ENCODE measurements at regions of chr22 and their contacts with region 1.

Region 1: DNA sequence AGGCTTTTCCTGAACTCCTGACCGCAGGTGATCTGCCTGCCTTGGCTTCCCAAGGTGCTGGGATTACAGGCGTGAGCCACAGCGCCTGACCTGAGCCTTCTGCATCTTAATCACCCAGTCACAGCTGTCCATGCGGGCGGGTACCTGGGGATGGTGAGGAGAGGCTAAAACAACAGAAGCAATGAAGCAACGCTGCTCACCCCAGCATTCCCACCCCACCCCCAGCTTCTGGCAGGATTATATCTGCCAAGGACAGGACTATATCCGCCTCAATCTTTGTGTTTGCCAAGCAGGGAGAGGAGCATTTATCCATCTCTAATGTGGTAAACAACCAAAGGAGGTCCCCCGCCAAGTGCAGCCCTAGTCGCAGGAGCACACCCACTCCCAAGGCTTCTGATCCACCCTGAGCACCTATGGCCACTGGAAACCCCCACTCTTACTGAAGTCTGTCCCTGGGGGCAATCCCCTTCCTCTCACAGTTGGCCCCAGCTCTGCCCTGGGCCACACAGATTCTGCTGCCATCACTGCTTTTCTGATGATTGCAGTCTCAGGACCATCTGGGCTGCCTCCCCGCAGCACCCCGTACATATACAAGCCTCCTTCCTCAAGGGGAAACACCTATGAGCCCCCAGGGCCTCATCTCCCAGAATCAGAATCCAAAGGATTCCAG is 8.8 kb upstream of the LGALS2 start:
- DNase-seq: peak in 1 of 2 experiments; percentile 66
- H3K4me3 ChIP-seq: no peak overlapping the region
- H3K27ac ChIP-seq: no peak overlapping the region
- H3K4me1 ChIP-seq: peaks cover 5% of the 10 kb centered on the region; the same call in 1 of the 2 replicates
- H3K27me3 ChIP-seq: no peaks in the 10 kb centered on the region
- CTCF ChIP-seq: no peak

Region 2: DNA sequence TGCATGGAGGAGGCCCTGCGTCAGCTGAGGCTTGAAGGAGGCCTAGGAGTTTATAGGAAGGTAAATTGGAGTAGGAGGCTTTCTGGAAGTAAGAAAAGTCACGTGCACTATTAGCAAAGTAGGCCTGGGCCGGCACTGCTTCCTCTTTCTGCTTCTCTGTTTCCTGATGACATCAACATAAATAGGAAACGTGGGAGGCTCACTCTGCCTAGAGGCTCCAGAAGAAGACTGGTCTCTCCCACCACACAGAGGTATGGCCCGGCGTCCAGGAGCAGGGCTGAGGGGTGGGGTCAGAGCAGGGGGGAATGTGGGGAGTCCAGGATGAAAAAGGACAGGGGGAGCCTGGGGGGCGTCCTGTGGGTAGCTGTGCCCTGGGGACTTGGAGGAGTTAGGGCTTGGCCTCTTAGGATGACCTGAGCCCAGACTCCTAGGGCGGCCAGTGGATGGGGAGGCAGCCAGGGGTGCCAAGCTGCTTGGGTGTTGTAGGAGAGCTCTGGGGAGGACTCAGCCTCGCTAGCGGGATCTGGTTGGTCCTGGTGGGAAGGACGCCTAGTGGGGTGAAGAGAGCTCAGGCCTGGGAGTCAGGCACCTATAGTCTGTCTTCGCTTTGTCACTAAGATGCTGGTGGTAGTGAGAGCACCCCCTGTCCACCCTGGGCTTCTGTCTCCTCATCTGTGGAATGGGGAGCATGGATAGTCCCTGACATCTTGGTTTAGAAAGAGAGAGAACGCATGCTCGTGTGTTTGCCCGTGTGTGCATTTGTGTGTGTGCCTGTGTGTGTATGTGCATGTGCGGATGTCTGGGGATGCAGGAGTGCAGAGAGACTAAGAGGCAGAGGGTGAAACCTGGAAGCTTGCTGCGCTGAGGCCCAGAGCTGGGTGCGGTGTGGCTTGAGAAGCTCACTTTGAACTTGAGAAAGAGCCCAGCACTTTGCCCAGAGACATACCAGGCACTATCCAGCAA is 675.0 kb before region 1 on chr22 and contains the start of gene CSF2RB:
- CTCF ChIA-PET with region 1: interaction called, 11 read pairs
- POLR2A ChIA-PET with region 1: no interaction called
- intact Hi-C with region 1: no loop called
- DNase-seq: no peak
- H3K4me3 ChIP-seq: no peak within 1 kb of the TSS
- H3K27ac ChIP-seq: no peak within 1 kb of the TSS
- H3K4me1 ChIP-seq: 0 out of 2 replicates have a peak, but pooled peaks cover 20% of the 10 kb centered on the region
- H3K27me3 ChIP-seq: no peaks in the 10 kb centered on the region
- CTCF ChIP-seq: no peak
- total RNA-seq, gene CSF2RB: not detected in 2 replicates

Region 3: GRCh38 chr22:37561212-37562048 is 27.3 kb before region 1 on chr22:
- CTCF ChIA-PET with region 1: interaction called, 31 read pairs
- POLR2A ChIA-PET with region 1: interaction called, 15 read pairs
- intact Hi-C with region 1: no loop called
- DNase-seq: peak; percentile 78 to 94
- H3K4me3 ChIP-seq: peak overlapping the region; percentile 95
- H3K27ac ChIP-seq: peak overlapping the region; percentile 82
- H3K4me1 ChIP-seq: peaks cover 57% of the 10 kb centered on the region
- H3K27me3 ChIP-seq: no peaks in the 10 kb centered on the region
- CTCF ChIP-seq: peak; percentile 98

Region 4: DNA sequence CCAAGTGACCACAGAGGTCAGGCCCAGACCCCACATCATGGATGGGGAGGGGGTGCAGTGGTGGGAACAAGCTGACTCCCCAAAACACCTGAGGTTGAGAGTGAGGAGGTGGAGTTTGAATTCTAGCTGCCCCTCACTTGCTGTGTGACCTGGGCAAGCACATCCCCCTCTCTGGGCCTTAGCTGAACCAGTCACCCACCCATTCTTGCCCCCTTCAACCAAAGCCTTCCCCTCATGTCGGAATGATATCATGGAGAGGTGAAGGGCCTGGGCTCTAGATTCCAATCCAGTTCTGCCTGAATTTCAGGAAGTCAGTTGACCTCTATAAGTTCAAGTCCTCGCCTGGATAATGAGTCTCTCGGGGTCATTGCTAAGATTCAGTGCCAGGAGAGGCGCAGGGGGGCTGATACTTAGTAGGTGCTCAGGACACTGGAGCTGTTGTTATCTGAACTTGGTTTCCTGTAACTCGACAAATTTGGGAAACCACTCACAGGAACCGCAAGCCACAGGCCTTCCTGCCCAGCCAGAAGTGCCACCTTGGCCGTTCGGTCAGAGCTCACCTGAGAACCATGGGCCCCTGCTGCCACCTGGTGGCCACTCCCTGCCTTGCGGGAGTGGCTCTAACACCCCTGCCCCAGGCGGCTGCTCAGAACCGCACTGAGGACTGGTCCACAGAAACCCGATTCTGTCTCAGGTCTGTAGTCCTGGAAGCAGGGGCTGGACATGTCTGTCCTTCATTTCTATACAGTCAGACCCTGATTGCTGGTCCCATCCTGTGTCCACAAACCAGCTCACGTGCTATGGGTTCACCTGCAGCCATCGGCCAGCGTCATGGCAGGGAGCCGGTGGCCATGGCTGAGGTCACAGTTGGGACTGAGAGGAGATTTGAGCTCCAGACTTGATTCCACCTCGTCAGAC is 21.5 kb before region 1 on chr22:
- CTCF ChIA-PET with region 1: interaction called, 31 read pairs
- POLR2A ChIA-PET with region 1: interaction called, 4 read pairs
- intact Hi-C with region 1: loop called (anchors 1 kb)
- DNase-seq: peak; percentile 93 to 98
- H3K4me3 ChIP-seq: no peak overlapping the region
- H3K27ac ChIP-seq: peak overlapping the region; percentile 81
- H3K4me1 ChIP-seq: peaks cover 91% of the 10 kb centered on the region
- H3K27me3 ChIP-seq: no peaks in the 10 kb centered on the region
- CTCF ChIP-seq: peak; percentile 99

Region 5: GRCh38 chr22:37633625-37634416 is 45.1 kb after region 1 on chr22:
- CTCF ChIA-PET with region 1: no interaction called
- POLR2A ChIA-PET with region 1: no interaction called
- intact Hi-C with region 1: no loop called
- DNase-seq: peak in 1 of 2 experiments; percentile 50
- H3K4me3 ChIP-seq: no peak overlapping the region
- H3K27ac ChIP-seq: no peak overlapping the region
- H3K4me1 ChIP-seq: peaks cover 6% of the 10 kb centered on the region
- H3K27me3 ChIP-seq: no peaks in the 10 kb centered on the region
- CTCF ChIP-seq: no peak

Measured in PC-9 (cell line).